Endothelial cell of umbilical vein (primary cell): ENCODE measurements at regions of chr5 and their contacts with region 1.

Region 1: DNA sequence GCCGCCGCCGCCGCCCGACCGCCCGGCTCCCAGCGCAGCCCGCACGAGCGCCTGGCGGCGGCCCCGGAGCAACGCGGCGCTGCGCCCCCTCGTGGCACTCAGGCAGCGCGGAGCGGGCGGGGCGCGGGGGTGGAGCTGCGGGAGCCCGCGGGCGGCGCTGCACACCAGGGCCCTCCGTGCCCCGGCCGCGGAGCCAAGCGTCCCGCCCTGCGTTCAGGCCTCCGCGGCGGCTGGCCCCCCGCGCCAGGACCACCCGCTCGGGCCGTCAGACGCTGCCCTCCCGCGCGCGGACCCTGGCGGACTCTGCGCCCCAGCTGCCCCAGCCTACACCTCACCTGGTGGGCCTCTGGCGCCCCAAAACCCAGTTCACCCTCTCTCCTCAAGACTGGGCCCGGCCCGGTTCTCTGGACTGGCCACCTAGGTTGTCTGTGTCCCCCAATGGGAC is at the start of gene RASGEF1C:
- DNase-seq: peak; percentile 40
- H3K4me3 ChIP-seq: peak within 1 kb of the TSS in 1 of 3 experiments; percentile 27
- H3K27ac ChIP-seq: no peak within 1 kb of the TSS
- H3K4me1 ChIP-seq: peaks cover 3% of the 10 kb centered on the region
- H3K27me3 ChIP-seq: peaks cover 10 to 21% of the 10 kb centered on the region in 2 experiments
- CTCF ChIP-seq: peak; percentile 36 to 46
- POLR2A ChIP-seq: no peak
- total RNA-seq, gene RASGEF1C: not detected in 2 replicates

Region 2: DNA sequence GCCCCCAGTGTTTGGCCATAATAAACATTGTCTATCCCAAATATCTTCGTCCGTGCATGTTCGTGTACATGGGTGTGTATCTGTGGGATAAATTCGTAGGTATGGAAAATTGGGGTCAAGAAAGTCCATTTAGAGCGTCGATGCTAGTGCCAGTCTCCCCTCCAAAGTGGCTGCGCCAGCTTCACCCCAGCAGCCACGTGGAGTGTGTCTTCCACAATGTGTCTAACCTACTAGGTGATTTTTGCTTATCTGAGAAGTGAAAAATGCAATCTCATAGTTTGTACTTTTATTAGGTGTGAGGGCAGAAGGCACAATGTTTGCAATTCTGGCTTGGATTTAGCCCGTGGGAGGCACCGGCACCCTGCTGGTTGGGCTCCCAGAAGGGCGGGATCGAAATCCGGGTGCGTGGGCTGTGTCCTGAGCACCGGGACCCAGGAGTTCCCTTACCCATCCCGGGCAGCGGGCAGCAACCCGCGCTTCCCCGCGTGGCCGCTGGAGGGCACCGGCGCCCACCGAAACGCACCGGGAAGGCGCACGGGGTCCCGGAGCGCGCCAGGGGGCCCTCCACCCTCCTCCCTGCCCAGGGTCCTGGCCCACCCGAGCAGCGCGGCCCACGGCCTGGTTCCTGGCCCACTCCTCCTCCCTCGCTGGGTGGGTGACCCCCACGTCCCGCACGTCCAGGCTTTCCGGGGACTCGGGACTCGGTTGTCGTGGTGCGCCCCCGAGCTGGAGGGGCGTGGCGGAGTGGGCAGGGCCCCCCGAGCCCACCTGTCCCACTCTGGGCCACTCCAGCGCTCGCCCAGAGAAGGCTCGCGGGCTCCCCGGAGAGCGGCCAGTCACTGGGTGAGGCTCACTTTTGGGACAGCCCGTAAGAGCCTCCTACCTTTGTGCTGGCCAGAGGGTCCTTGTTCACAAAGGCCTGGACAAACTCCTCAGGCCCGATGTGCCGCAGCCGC is 82.2 kb before region 1 on chr5:
- CTCF ChIA-PET with region 1: interaction called, 36 read pairs
- POLR2A ChIA-PET with region 1: no interaction called
- dilution Hi-C with region 1: no loop called
- intact Hi-C with region 1: loop called (anchors 1 kb)
- DNase-seq: no peak
- H3K4me3 ChIP-seq: no peak overlapping the region
- H3K27ac ChIP-seq: no peak overlapping the region
- H3K4me1 ChIP-seq: no peaks in the 10 kb centered on the region
- H3K27me3 ChIP-seq: peaks cover 0 to 2% of the 10 kb centered on the region in 2 experiments
- CTCF ChIP-seq: peak; percentile 70 to 84
- POLR2A ChIP-seq: no peak